Activated CD4-positive, alpha-beta T cell treated with anti-CD3 and anti-CD28 coated beads for 36 hours (primary cell): ENCODE measurements at regions of chr1 and their contacts with region 1.

Region 1: DNA sequence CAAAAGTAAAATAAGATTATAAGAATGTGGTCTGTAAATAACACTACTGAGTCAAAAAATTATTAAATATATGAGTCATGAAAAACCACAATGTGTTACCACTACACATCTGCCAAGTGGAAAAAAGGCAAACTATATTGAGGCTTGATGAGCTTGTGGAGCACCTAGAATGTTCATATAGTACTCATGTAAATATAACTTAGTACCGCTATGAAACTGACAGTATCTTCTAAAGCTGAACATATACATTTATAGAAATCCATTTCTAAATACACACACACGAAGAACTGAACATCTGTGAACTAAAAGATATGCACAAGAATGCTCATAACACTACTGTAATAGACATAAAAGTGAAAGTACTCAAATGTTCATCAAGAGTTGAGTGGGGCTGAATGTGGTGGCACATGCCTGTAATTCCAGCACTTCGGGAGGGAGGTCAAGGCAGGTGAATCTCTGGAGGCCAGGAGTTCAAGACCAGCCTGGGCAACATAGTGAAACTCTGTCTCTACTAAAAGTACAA is 18.5 kb upstream of the GBP3 start:
- DNase-seq: peak; percentile 51
- ATAC-seq: peak; percentile 90
- H3K4me3 Mint-ChIP-seq: peak overlapping the region; percentile 2
- H3K27ac Mint-ChIP-seq: peak overlapping the region; percentile 11
- H3K4me1 Mint-ChIP-seq: peaks cover 33% of the 10 kb centered on the region
- H3K27me3 Mint-ChIP-seq: peaks cover 14% of the 10 kb centered on the region

Region 2: DNA sequence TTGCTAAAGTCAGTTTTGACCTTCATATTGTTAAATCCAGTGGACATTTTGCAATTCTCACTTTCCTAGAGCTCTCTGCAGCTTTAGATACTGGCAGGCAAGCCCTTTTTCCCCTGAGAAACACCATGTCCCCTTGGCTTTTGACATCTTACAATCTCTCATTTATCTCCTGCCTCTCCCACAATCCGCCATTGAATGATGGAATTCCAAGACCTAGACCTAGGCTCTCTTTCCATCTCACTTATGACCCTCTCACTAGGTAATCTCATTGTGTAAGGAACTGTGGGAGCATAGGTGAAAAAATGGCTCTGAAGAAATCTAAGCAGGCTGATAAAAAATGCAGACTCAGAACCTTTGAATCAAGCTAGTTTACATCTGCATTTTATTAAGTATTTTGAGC is 50.8 kb before region 1 on chr1:
- CTCF ChIA-PET with region 1: no interaction called
- POLR2A ChIA-PET with region 1: no interaction called
- intact Hi-C with region 1: loop called in 1 of 2 experiments (anchors 1 kb)
- DNase-seq: no peak
- ATAC-seq: no peak
- H3K4me3 Mint-ChIP-seq: peak overlapping the region; percentile 41
- H3K27ac Mint-ChIP-seq: peak overlapping the region; percentile 48
- H3K4me1 Mint-ChIP-seq: peaks cover 50% of the 10 kb centered on the region
- H3K27me3 Mint-ChIP-seq: no peaks in the 10 kb centered on the region

Region 3: DNA sequence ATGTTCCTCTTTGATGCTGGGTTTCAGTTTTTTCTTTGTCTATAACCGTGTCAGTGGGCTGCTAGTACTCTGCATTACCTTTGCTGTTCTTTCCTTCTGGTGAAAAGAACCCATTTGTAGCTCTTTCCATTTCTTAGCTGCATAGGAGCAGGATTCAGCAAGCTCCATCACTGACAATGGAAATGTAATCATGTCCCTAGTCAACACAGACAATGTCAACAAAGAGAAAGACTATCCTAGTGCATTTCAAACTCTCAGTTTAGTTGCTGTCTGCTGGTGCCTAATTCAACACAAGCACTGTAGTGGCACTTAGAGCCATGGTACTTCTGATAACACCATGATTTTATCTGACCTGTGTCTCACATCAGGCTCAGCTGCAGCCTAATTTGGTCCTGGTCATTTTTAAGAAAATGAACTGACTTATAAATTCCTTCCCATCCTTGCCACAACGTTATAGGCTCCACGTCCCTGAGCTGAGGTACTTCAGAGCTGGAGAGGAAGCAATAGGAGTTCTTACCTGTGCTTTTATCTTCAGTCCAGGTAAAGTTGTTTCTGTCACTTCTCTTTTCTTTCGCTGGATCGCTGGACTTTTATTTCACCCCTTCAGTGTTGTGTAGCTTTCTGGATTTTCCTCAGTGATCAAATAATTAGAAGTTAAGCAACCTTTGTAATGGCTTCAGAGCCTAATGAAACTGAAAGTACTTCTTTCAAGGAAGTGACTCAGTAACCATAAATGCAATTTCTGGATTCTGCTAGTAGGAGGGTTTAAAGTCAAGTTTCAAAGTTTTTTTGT is 18.8 kb before region 1 on chr1 and contains the start of gene GBP3:
- CTCF ChIA-PET with region 1: interaction called, 15 read pairs
- POLR2A ChIA-PET with region 1: interaction called, 3 read pairs
- intact Hi-C with region 1: loop called (anchors 1 kb)
- DNase-seq: no peak
- ATAC-seq: peak; percentile 82
- H3K4me3 Mint-ChIP-seq: peak within 1 kb of the TSS; percentile 79
- H3K27ac Mint-ChIP-seq: peak within 1 kb of the TSS; percentile 93
- H3K4me1 Mint-ChIP-seq: peaks cover 54% of the 10 kb centered on the region
- H3K27me3 Mint-ChIP-seq: no peaks in the 10 kb centered on the region
- total RNA-seq, gene GBP3: 4.8 to 5.8 TPM

Region 4: GRCh38 chr1:89065079-89065868 is 24.1 kb after region 1 on chr1 and contains the start of gene GBP1:
- CTCF ChIA-PET with region 1: interaction called, 6 read pairs
- POLR2A ChIA-PET with region 1: interaction called, 3 read pairs
- intact Hi-C with region 1: loop called in 1 of 2 experiments (anchors 1 kb)
- DNase-seq: peak; percentile 24
- ATAC-seq: peak; percentile 77
- H3K4me3 Mint-ChIP-seq: peak within 1 kb of the TSS; percentile 78
- H3K27ac Mint-ChIP-seq: peak within 1 kb of the TSS; percentile 93
- H3K4me1 Mint-ChIP-seq: peaks cover 58% of the 10 kb centered on the region
- H3K27me3 Mint-ChIP-seq: no peaks in the 10 kb centered on the region
- total RNA-seq, gene GBP1: 67.6 to 79.9 TPM

Region 5: DNA sequence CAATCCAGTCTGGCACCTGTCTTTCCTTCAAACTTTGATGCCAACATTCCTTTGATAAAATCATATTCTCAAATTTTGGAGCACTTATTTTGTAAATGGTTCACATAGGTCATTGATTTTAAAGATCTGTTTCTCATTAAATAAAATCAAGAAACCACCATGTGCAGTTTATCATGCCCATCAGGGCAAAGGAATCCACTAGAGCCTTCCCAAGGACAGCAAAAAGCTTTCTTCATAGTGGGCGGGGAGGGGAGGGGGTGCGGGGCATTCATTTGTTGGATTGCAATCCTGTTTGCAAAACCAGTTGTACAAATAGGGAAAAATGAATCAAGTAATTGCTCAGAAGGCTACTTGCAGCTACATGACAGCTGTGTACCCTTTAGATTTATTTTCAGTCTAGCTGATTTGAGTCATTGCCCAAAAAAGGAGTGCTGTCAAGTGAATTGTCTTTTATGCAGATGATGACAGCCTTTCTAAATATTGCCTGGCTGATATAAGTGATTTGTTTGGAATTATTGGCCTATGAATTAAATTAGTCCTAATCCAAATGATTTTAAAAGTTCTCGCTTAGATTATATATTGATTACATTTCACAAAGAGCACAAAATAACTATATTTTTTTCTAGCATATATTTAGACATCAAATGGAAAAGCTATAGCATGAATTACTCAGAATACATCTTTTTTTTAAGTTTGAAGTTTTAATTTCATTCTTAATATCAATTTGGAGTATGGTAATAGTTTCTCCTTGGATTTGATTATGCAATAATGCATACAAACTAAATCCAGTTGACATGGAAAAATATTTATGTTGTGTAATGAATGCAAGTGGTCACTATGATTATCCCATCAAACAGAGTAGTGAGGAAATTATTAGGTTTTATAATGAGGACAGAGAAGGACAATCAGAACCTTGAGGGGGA is 506.6 kb after region 1 on chr1:
- CTCF ChIA-PET with region 1: no interaction called
- POLR2A ChIA-PET with region 1: no interaction called
- intact Hi-C with region 1: loop called in 1 of 2 experiments (anchors 10 kb)
- DNase-seq: peak; percentile 70
- ATAC-seq: peak; percentile 48
- H3K4me3 Mint-ChIP-seq: peak overlapping the region; percentile 20
- H3K27ac Mint-ChIP-seq: peak overlapping the region; percentile 95
- H3K4me1 Mint-ChIP-seq: peaks cover 86% of the 10 kb centered on the region
- H3K27me3 Mint-ChIP-seq: no peaks in the 10 kb centered on the region